Right ventricle myocardium inferior (tissue), 1 donor: ENCODE measurements at regions of chr13 and their contacts with region 1.

Region 1: DNA sequence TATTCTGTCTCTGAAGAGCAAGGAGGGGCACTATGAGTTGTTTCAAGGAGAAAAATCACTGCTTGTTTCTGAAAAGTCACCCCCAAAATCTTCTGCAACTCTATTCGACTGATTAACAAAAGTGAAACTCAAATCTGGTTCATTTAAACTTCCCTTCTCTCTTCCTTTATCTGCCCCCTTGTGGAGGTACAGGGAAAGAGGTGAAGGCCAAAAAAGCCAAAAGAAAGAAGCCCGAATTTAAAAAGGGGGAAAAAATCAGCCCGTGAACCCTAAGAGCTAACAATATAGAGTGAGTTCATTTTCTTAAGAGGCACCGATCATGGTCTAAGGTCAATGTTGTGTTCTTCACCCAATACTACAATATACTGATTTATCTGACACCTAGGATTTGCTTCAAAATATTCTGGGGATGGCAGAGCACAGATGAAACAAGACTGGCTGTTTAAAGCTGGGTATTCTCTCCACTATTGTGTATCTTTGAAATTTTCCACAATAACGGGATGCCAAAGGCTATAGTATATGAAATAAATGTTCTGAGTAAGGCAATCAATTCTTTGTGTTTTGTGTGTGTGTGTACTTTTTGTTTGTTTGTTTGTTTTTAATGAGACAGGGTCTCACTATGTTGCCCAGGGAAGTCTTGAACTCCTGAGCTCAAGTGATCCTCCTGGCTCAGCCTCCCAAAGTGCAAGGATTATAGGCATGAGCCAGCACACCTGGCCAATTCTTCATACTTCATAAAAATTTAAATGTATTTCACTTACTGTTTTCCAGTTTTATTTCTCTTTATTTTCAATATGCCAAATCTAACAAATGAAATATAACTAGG is 55.0 kb upstream of the EEF1AKMT1 start:
- DNase-seq: no peak
- ATAC-seq: no peak

Region 2: GRCh38 chr13:20624213-20624612 is 204.5 kb before region 1 on chr13:
- intact Hi-C with region 1: no loop called
- DNase-seq: no peak
- ATAC-seq: no peak

Region 3: DNA sequence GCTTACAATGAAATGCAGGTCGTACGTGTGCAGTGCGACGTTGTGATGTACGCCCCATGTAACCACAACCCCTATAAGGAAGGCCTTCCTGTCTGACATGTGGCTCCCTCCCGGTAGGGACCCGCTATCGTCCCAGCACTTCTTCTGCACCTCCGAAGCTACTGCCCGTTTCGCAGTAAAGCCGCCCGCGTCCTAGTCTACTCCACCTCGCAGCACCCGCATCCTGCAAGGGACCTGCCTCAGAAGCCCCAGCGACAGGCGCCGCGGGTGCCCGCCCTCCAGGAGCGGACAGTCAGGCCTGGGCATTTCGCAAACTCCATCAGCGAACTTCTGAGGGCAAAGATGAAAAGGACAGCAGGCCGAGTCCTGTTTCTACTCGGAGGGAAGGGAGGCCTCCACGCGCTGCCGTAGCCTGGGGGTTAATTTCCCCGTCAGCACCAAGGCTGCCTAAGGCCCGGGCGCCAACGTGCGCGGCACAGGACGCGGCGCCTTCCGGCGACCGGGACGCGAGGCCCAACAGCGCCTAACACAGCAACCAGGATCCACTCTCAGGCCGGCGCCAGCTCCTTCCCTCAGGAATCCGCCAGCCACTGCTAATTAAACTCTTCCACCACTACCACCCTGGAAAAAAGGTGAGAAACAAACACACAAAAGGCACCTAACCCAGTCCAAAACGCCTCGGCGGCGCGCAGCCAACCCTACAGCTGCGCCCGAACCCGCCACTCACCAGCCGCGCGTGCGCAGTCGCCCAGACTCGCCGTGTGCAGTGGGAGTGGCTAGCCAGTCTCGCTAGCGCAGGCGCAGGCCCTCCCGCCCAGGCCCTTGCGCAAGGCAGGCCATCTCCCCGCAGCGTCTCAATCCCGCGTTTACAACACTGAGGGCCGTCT is 55.3 kb before region 1 on chr13 and contains the start of gene EEF1AKMT1:
- intact Hi-C with region 1: loop called (anchors 5 kb)
- DNase-seq: peak; percentile 98
- ATAC-seq: peak; percentile 99
- total RNA-seq, gene EEF1AKMT1: 9.3 TPM